Breast epithelium (tissue), 4 donors: ENCODE measurements at regions of chr14 and their contacts with region 1.

Region 1: GRCh38 chr14:61025251-61026223 is 44.5 kb downstream of the SLC38A6 start:
- DNase-seq: peak; percentile 22 to 63
- H3K4me3 ChIP-seq: no peak overlapping the region
- H3K27ac ChIP-seq: no peak overlapping the region
- H3K4me1 ChIP-seq: no peaks in the 10 kb centered on the region
- H3K27me3 ChIP-seq: no peaks in the 10 kb centered on the region
- CTCF ChIP-seq: peak in 2 of 3 donors; percentile 74 to 80
- POLR2A ChIP-seq: no peak

Region 2: DNA sequence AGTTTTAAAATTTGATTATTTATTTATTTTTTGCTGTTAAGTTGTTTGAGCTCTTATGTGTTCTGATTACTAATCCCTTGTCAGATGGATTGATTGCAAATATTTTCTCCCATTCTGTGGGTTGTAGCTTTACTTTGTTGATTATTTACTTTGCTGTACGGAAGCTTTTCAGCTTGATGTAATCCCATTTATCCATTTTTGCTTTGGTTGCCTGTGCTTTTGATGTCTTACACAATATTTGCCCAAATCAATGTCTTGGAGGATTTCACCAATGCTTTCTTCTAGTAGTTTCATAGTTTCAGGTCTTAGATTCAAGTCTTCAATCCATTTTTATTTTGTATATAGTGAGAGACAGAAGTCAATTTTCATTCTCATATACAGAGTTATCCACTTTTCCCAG is 990.4 kb before region 1 on chr14:
- intact Hi-C with region 1: loop called (anchors 5 kb)
- DNase-seq: no peak
- H3K4me3 ChIP-seq: no peak overlapping the region
- H3K27ac ChIP-seq: no peak overlapping the region
- H3K4me1 ChIP-seq: no peaks in the 10 kb centered on the region
- H3K27me3 ChIP-seq: no peaks in the 10 kb centered on the region
- CTCF ChIP-seq: no peak
- POLR2A ChIP-seq: no peak

Region 3: DNA sequence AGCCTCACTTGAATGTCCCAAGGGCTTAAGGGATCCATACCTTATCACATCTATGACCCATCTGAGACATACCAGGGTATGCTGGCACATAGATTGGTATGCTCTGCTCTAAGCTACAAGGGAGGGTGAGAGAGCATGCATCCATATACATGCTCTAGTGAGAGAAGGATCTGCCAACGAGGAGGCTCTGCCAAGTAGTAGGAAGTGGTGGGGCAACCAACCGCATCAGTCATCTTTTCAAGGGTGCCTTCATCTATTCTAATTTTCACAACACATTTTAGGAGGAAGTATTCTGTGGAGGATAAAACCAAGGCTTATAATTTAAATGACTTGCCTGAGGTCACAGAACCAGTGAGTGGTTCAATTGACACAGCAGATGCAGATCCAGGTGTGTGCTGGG is 783.1 kb before region 1 on chr14:
- intact Hi-C with region 1: no loop called
- DNase-seq: no peak
- H3K4me3 ChIP-seq: no peak overlapping the region
- H3K27ac ChIP-seq: no peak overlapping the region
- H3K4me1 ChIP-seq: no peaks in the 10 kb centered on the region
- H3K27me3 ChIP-seq: no peaks in the 10 kb centered on the region
- CTCF ChIP-seq: no peak
- POLR2A ChIP-seq: no peak

Region 4: DNA sequence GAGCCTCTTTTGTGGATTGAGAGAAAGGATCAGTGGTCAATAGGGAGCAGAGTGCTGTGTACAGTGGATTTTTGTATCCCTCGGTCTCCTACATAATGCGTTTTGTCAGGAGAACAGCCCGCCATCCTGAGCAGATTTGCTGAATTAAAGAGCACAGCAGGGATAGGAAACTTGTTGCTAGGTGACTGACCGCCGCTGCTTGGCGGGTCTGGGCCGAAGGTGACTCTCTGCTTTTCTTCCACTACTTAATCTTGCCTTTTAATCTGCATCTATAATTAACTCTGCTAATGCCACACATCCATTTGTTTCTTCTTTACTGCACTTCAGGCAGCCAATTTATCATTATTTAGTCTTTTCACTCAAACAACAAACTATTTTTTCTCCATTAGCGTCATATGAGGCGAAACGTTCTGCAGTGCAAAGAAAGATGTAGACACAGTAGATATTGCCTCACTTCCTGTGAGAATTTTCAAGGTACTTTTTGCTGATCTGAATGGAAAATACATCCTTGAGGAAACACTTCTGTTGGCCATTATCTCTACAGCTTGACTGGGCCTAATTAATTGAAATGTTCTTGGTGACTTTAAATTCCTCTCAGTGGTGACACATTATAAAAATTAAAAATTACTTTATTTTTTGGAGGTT is 668.5 kb before region 1 on chr14:
- intact Hi-C with region 1: no loop called
- DNase-seq: no peak
- H3K4me3 ChIP-seq: no peak overlapping the region
- H3K27ac ChIP-seq: no peak overlapping the region
- H3K4me1 ChIP-seq: no peaks in the 10 kb centered on the region
- H3K27me3 ChIP-seq: no peaks in the 10 kb centered on the region
- CTCF ChIP-seq: no peak
- POLR2A ChIP-seq: no peak

Region 5: DNA sequence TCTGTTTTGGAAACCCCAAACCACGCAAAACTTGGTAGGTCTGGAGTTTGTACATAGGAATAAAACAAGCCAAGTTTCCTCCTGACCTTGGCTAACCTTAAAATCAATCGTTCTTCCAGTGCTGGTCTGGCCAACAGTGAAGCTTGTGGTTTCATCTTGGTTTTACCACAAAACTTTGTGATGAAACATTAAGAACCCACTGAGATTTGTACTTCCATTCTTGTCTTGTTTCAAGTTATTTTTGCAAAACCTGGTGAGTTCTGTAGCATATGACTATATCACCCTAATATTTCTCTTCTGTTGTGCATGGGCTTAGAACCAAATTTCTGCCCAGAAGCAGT is 402.6 kb before region 1 on chr14:
- intact Hi-C with region 1: loop called (anchors 10 kb)
- DNase-seq: no peak
- H3K4me3 ChIP-seq: no peak overlapping the region
- H3K27ac ChIP-seq: peak overlapping the region in 1 of 2 donors; percentile 3
- H3K4me1 ChIP-seq: no peaks in the 10 kb centered on the region
- H3K27me3 ChIP-seq: no peaks in the 10 kb centered on the region
- CTCF ChIP-seq: no peak
- POLR2A ChIP-seq: no peak